Keratinocyte (primary cell): ENCODE measurements at regions of chr17 and their contacts with region 1.

Region 1: DNA sequence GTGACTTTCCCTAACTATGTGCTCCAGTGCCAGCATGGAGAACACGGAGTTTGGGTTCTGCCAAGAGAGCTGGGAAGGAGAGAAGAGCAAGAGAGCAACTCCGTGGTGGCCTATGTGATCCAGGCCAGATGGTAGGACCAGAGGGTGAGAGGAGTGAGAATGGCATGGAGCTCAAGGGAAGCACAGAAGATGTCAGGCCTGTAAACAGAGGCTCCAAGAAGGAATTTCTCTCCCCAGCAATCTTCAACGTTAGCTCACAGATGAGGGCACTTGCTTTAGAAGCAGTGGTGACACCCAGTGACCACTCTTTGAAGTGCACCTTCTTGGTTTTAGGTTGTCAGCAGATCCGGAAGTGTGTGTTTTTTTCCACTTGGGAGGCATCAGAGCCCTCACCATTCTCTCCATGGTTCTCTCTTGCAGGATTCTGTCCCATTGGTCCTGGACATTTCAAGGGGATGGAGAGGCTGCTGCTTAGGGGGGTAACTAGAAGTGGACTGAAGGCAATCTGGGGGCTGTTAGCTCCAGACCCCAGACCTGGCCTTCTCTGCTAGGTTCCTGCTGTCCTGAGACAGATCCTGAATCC is 18.1 kb upstream of the TMEM98 start:
- DNase-seq: peak; percentile 44
- H3K4me3 ChIP-seq: no peak overlapping the region
- H3K27ac ChIP-seq: no peak overlapping the region
- H3K4me1 ChIP-seq: peaks cover 3% of the 10 kb centered on the region
- H3K27me3 ChIP-seq: no peaks in the 10 kb centered on the region
- CTCF ChIP-seq: peak; percentile 79 to 97 (median 89)

Region 2: GRCh38 chr17:32783602-32784001 is 126.3 kb before region 1 on chr17:
- dilution Hi-C with region 1: loop called (anchors 25 kb)
- DNase-seq: peak; percentile 48
- H3K4me3 ChIP-seq: no peak overlapping the region
- H3K27ac ChIP-seq: no peak overlapping the region
- H3K4me1 ChIP-seq: no peaks in the 10 kb centered on the region
- H3K27me3 ChIP-seq: no peaks in the 10 kb centered on the region
- CTCF ChIP-seq: peak in 2 of 3 experiments; percentile 41 to 44